ENCODE measurements at regions of chr11 and their contacts with region 1.

Region 1: GRCh38 chr11:73325036-73325981 is 17.2 kb downstream of the ARHGEF17 start:
- DNase-seq: peak; percentile 88
- CTCF ChIP-seq: no peak

Region 2: DNA sequence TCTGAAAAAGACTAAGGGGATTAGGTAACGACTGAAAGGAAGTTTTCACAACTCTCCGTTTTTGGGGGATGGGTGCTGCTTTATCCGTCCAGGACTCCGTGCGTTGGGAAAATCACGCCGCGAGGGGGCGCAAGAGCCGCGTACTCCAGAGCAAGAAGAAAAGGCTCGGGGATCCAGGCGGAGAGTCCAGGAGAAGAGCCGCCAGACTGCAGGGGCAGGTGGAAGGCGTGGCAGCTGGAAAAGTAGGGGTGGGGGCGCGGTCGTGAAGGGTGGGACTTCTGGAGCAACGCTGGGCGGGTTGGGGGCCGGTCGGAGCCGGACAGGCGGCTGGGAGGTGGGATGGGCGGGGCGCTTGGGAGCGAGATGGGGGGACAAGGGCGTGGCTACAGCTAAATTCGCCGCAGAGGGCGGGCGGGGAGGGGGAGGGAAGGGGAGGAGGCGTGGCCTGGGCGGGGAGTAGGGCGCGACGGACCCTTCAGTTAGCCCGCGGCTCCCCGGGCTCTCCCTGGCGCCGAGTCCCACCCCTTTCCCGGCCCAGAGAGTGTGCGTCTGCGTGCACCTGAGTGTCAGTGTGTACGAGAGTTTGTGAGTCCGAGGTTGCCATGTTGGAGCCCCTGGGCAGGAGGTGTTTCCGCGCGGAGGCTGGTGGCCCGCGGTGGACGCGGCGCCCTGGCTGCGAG is 17.8 kb before region 1 on chr11:
- CTCF ChIA-PET with region 1: interaction called, 302 read pairs
- POLR2A ChIA-PET with region 1: no interaction called
- DNase-seq: peak; percentile 95
- CTCF ChIP-seq: peak; percentile 89

Measured in GM10248 (cell line).